A549 (cell line): ENCODE measurements at regions of chr4 and their contacts with region 1.

Region 1: DNA sequence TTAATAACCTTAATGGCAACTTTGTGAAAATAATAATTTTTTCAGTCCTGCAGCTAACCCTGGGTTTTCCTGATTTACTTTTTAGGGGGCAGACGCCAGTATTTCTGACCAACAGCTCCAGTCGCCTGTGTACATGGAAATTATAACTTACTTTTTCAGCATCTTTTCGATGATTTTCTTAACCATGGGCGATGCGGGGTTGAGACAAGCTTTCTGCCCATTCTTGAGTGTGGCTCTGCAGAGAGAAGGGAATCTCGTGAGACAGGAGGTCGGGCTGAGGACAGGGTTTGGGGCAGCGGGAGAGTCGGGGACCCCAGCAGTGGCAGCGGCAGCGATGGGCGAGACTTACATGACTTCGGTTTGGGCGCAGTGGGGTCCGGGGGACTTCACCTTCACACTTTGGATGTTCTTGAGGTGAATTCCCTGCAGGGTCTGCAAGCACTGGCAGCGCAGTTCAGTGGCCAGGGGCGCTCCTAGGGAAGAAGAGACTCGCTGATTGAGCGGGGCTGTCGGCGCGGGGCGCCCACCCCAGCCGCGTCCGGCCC is 473 bp downstream of the CXCL2 start:
- DNase-seq: no peak
- ATAC-seq: peak in 1 of 2 experiments; percentile 1; a peak in 2 of 6 replicates
- H3K4me3 ChIP-seq: peak overlapping the region; percentile 85
- H3K27ac ChIP-seq: peak overlapping the region; percentile 96 to 99
- H3K4me1 ChIP-seq: peaks cover 49% of the 10 kb centered on the region
- CTCF ChIP-seq: no peak; the same call in 2 of the 3 replicates
- EP300 ChIP-seq: no peak
- POLR2A ChIP-seq: no peak
- RAD21 ChIP-seq: peak in 1 of 2 experiments; percentile 20; a peak in 1 of 5 replicates

Region 2: GRCh38 chr4:74038161-74039064 is 60.1 kb before region 1 on chr4 and contains the start of gene CXCL3:
- CTCF ChIA-PET with region 1: interaction called, 5 read pairs
- POLR2A ChIA-PET with region 1: interaction called, 28 read pairs
- DNase-seq: peak; percentile 46 to 72
- ATAC-seq: peak; percentile 93 to 95
- H3K4me3 ChIP-seq: peak within 1 kb of the TSS; percentile 92
- H3K27ac ChIP-seq: peak within 1 kb of the TSS; percentile 95
- H3K4me1 ChIP-seq: peaks cover 43% of the 10 kb centered on the region
- CTCF ChIP-seq: peak; percentile 50; the same call in 2 of the 3 replicates
- EP300 ChIP-seq: no peak
- POLR2A ChIP-seq: no peak; the same call in 1 of the 2 replicates
- RAD21 ChIP-seq: peak in 1 of 2 experiments; percentile 63; a peak in 3 of 5 replicates
- polyA plus RNA-seq, gene CXCL3: 14.9 and 17.9 TPM in 2 replicates

Region 3: GRCh38 chr4:74056858-74057562 is 41.5 kb before region 1 on chr4:
- CTCF ChIA-PET with region 1: interaction called, 5 read pairs
- POLR2A ChIA-PET with region 1: interaction called, 16 read pairs
- DNase-seq: peak; percentile 26 to 71
- ATAC-seq: peak; percentile 78 to 92
- H3K4me3 ChIP-seq: no peak overlapping the region
- H3K27ac ChIP-seq: peak overlapping the region; percentile 85 to 87
- H3K4me1 ChIP-seq: peaks cover 29% of the 10 kb centered on the region
- CTCF ChIP-seq: no peak
- EP300 ChIP-seq: peak; percentile 74 to 76; a peak in 3 of 5 replicates
- POLR2A ChIP-seq: no peak
- RAD21 ChIP-seq: no peak

Region 4: GRCh38 chr4:74109116-74109869 is 10.8 kb after region 1 on chr4:
- CTCF ChIA-PET with region 1: interaction called, 18 read pairs
- POLR2A ChIA-PET with region 1: interaction called, 129 read pairs
- DNase-seq: peak; percentile 64 to 94
- ATAC-seq: peak; percentile 94 to 97
- H3K4me3 ChIP-seq: no peak overlapping the region; the same call in 2 of the 3 replicates
- H3K27ac ChIP-seq: peak overlapping the region; percentile 95 to 99
- H3K4me1 ChIP-seq: peaks cover 70% of the 10 kb centered on the region
- CTCF ChIP-seq: no peak
- EP300 ChIP-seq: peak; percentile 74 to 88; a peak in 4 of 5 replicates
- POLR2A ChIP-seq: no peak
- RAD21 ChIP-seq: peak in 1 of 2 experiments; percentile 26; a peak in 1 of 5 replicates

Region 5: DNA sequence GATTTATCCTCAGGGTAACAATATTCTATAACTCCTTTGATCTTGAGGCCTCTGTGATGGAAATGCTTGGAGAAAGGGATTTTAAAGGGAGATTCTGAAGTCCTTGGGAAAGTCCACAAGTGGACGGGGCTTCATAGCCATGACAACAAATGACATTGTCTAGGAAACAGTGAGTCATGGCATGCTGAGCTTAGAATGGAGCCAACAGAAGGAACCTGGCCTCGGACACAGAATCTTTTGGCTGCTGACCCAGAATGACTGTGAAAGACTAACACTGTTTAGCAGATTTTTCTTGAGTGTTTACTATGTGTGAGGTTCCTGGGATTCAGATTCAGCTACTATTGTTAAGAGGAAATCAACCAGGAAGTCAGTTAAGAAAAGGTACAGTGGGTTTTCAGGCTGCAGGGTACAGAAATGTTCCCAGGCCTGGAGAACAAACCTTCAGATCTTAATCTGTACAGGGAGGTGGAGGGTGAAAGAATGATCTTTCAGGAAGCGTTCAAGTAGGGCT is 18.6 kb after region 1 on chr4:
- CTCF ChIA-PET with region 1: interaction called, 7 read pairs
- POLR2A ChIA-PET with region 1: interaction called, 23 read pairs
- DNase-seq: peak; percentile 41 to 93
- ATAC-seq: peak; percentile 94 to 96
- H3K4me3 ChIP-seq: no peak overlapping the region
- H3K27ac ChIP-seq: peak overlapping the region; percentile 95 to 99
- H3K4me1 ChIP-seq: peaks cover 54% of the 10 kb centered on the region
- CTCF ChIP-seq: no peak
- EP300 ChIP-seq: peak in 1 of 2 experiments; percentile 40; a peak in 1 of 5 replicates
- POLR2A ChIP-seq: no peak
- RAD21 ChIP-seq: 0 out of 5 replicates have a peak, but pooled peaks of 1 of the 2 experiments have one; percentile 15